RWPE1 (cell line): ENCODE measurements at regions of chr1 and their contacts with region 1.

Region 1: DNA sequence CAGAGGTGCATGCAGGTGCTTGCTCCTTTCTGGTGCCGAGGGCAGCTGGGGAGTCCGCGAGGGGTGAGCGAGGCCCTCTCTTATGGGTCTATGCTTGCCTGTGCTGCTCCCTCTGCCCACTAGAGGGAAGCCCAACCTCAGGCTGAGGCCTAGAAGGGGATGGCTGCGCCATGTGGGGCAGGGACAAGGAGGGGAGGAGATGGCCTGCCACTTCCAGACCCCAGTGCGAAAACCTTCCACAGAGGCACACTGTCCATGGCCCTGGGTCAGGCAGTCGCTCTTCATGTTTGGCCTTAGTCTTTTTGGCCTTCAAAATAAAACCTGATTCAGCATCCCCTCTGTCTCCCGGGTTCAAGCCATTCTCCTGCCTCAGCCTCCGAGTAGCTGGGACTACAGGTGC is 14.0 kb downstream of the RHBG start:
- DNase-seq: peak; percentile 63
- H3K27ac ChIP-seq: no peak overlapping the region
- CTCF ChIP-seq: peak; percentile 73

Region 2: GRCh38 chr1:156259805-156260204 is 123.2 kb before region 1 on chr1:
- CTCF ChIA-PET with region 1: no interaction called
- POLR2A ChIA-PET with region 1: no interaction called
- DNase-seq: no peak
- H3K27ac ChIP-seq: peak overlapping the region; percentile 97
- CTCF ChIP-seq: no peak

Region 3: DNA sequence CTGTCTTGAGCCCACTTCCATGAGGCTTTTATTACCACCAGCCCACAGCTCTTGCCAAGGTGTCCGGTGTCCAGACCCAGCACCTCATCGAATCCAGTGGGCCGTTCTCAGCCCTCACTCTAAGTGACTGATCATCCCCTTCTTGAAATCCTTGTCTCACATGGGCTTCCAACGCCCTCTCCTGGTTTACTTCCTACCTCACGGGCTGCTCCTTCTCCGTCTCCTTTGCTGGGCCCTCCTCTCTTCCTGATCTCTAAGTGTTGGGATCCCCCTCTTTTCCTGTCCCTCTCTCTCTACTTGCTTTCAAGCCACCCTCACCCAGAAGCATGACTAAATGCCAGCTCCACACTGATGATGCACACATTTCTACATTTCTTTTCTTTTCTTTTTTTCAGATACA is 23.1 kb before region 1 on chr1:
- CTCF ChIA-PET with region 1: interaction called, 12 read pairs
- POLR2A ChIA-PET with region 1: no interaction called
- DNase-seq: no peak
- H3K27ac ChIP-seq: no peak overlapping the region
- CTCF ChIP-seq: no peak

Region 4: GRCh38 chr1:156422602-156423126 is 39.6 kb after region 1 on chr1:
- CTCF ChIA-PET with region 1: interaction called, 12 read pairs
- POLR2A ChIA-PET with region 1: no interaction called
- DNase-seq: peak; percentile 22
- H3K27ac ChIP-seq: no peak overlapping the region
- CTCF ChIP-seq: no peak

Region 5: DNA sequence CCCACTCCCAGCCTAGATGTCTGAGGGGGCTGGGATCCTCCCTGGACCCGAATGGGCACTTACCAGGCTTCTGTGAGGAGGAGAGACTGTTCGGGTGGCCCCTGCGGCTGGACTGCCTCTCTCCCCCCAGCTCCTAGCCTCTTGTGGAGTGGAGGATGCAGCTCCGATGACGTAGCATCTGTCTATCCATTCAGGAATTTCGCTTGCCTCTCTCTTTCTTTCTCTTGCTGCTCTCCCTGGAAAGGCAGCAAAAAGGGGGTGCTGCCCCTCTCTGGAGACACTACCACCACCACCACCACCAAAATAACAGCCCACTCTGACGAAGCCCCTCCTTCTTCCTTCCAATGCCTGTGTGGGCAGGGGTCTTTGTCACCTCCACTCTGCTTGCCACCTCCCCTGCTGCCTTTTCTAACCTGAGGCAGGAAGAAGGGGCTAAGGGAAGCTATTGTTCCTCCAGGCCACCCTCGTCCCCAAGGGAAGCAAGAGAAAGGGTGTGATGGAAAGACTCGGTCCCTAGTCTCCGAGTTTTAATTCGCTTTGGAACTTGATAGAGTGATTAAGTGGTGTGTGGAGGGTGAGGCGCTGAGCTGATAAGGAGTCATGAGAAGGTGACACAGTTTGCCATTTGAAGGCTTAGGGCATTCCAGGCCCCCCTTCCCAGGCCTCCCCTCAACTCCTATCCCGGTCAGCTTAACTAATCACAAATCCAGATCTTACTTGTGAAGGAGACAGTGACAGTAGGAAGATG is 46.5 kb after region 1 on chr1:
- CTCF ChIA-PET with region 1: interaction called, 15 read pairs
- POLR2A ChIA-PET with region 1: no interaction called
- DNase-seq: no peak
- H3K27ac ChIP-seq: no peak overlapping the region
- CTCF ChIP-seq: no peak

Region 6: GRCh38 chr1:156445789-156446263 is 62.8 kb after region 1 on chr1:
- CTCF ChIA-PET with region 1: interaction called, 102 read pairs
- POLR2A ChIA-PET with region 1: interaction called, 5 read pairs
- DNase-seq: peak; percentile 82
- H3K27ac ChIP-seq: no peak overlapping the region
- CTCF ChIP-seq: peak; percentile 93

Region 7: DNA sequence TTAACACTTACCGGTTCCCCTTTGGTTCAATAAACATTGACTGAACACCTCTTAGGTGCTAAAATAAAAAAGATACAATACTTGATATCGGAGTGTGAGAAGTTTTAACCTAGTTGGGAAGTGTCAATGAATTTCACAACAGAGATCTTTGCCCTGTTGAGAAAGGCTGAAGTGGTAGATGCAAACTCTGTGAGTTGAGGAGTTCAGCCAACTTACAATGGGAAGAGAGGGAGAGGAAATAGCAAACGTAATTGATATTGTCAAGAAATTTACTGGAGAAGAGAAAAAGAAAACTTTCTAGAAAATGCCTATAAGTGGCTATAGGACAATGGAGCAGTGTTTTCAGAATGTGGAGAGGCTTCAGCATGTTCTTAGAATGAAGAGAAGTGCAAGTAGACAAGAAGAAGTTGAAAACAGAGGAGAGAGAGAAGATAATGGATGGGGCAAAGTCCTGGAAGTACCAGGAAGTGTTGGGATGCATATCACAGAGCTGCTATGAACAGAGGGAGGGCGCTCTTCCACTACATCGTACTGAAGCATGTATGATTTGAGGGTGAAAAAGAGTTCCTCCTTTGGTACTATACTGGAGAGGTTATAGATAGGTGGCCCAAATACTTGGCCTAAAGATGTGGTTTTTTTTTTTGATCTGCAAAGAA is 68.6 kb after region 1 on chr1:
- CTCF ChIA-PET with region 1: interaction called, 102 read pairs
- POLR2A ChIA-PET with region 1: interaction called, 5 read pairs
- DNase-seq: no peak
- H3K27ac ChIP-seq: no peak overlapping the region
- CTCF ChIP-seq: no peak